Heart left ventricle (tissue), 16 donors: ENCODE measurements at regions of chr19 and their contacts with region 1.

Region 1: DNA sequence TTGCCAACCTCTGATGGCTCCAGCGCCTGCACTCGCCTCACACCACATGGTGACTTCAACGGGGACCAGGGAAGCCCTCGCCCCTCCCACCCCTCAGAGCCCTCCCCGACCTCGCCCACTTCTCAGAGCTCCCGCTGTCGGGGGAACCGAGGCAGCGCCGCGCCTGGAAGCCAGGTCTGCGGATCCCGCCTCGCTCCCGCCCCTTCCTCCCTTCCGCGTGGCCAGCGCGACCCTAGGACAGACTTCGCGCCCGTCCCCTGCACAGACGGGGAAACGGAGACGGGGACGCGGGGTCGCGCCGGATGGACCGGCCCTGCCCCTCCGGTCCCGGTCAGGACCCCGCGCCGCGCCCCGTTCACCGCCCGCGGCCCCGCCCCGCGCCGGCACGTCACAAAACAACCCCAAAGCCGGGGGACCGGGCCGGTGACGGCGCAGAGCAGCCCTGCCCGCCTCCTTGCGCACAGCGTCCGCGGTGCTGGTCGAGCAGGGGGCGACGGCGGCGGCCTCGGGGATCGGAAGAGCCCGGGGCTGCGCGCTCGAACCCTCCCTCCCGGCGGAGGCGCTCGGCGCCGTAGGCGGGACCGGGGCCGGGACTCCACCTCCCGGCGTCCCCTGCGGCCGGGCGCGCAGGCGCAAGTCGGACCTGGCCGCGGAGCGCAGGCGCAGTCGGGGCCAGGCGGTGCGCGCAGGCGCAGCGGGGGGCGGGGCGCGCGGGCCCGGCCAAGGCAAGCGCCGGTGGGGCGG is 379 bp upstream of the CDC34 start:
- DNase-seq: peak; percentile 85 to 94 (median 88)
- ATAC-seq: peak; percentile 27 to 80 (median 68)
- H3K4me3 ChIP-seq: peak overlapping the region; percentile 74 to 100 (median 92)
- H3K27ac ChIP-seq: peak overlapping the region; percentile 93 to 100 (median 98)
- H3K4me1 ChIP-seq: peaks cover 16 to 35% (median 28%) of the 10 kb centered on the region in 12 donors
- H3K27me3 ChIP-seq: peaks cover 0 to 2% (median 0%) of the 10 kb centered on the region in 9 donors
- CTCF ChIP-seq: peak in 3 of 12 donors; percentile 16 to 25 (median 19)
- POLR2A ChIP-seq: peak in 1 of 2 donors; percentile 72

Region 2: GRCh38 chr19:572140-572742 is 41.1 kb after region 1 on chr19 and contains the start of gene BSG:
- intact Hi-C with region 1: loop called in 9 of 10 experiments (anchors 2 to 5 kb)
- DNase-seq: peak; percentile 99
- ATAC-seq: peak; percentile 52 to 78 (median 74)
- H3K4me3 ChIP-seq: peak within 1 kb of the TSS; percentile 71 to 100 (median 98)
- H3K27ac ChIP-seq: peak within 1 kb of the TSS; percentile 85 to 99 (median 96)
- H3K4me1 ChIP-seq: peaks cover 0 to 53% (median 42%) of the 10 kb centered on the region in 12 donors
- H3K27me3 ChIP-seq: no peaks in the 10 kb centered on the region
- CTCF ChIP-seq: no peak
- POLR2A ChIP-seq: peak; percentile 96 to 99
- total RNA-seq, gene BSG: 1,160 to 2,590 (median 1,462) TPM

Region 3: DNA sequence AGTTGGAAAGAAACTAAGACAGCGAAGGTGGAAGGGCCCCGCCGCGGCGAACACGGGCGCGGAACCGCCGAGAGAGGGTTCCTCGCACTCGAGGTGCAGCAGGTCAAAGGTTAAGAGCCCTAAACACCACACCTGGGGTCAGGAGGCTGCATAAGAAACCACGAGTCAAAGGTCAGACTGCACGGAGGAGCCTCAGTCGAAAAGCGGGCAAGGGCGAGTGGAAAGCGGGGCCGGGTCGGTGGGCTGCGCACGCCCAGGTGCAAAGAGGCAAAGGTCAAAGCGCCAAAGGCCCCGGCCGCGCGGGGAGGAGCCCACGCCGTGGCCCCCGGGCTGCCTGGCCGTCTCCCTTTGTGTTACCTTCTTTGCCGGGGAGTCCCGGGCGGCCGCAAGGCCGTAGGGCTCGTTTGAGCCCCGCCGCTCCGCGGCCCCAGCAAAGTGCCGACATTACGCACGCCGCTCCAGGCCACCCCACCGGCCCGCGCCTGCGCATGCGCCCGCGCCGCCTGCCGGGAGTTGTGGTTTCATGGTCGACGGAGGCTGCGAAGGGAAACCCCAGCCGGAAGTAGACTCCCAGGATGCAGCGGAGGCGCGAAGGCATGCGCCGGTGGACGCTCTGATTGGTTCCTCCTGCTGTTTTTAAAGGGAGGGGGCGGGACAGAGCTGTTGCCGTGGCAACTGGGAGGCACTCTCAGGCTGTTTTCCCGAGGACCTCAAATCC is 102.0 kb after region 1 on chr19 and contains the start of gene POLRMT:
- intact Hi-C with region 1: loop called in 1 of 10 experiments (anchors 10 kb)
- DNase-seq: peak; percentile 98 to 99 (median 99)
- ATAC-seq: peak; percentile 95 to 98 (median 98)
- H3K4me3 ChIP-seq: peak within 1 kb of the TSS; percentile 57 to 99 (median 96)
- H3K27ac ChIP-seq: peak within 1 kb of the TSS in 11 of 12 donors; percentile 57 to 86 (median 79)
- H3K4me1 ChIP-seq: peaks cover 6 to 28% (median 17%) of the 10 kb centered on the region in 12 donors
- H3K27me3 ChIP-seq: no peaks in the 10 kb centered on the region
- CTCF ChIP-seq: peak in 6 of 12 donors; percentile 9 to 50 (median 18)
- POLR2A ChIP-seq: peak in 1 of 2 donors; percentile 36
- total RNA-seq, gene POLRMT: 32.0 to 78.0 (median 41.5) TPM